ENCODE measurements at regions of chr5 and their contacts with region 1.

Region 1: GRCh38 chr5:126370796-126371718 is 52.2 kb upstream of the GRAMD2B start:
- DNase-seq: no peak
- ATAC-seq: no peak
- H3K4me3 ChIP-seq: no peak overlapping the region
- H3K27ac ChIP-seq: no peak overlapping the region
- H3K4me1 ChIP-seq: peaks cover 0 to 11% (median 0%) of the 10 kb centered on the region in 9 donors
- H3K27me3 ChIP-seq: no peaks in the 10 kb centered on the region
- CTCF ChIP-seq: no peak

Region 2: GRCh38 chr5:126198531-126198930 is 172.5 kb before region 1 on chr5:
- intact Hi-C with region 1: no loop called
- DNase-seq: no peak
- ATAC-seq: no peak
- H3K4me3 ChIP-seq: no peak overlapping the region
- H3K27ac ChIP-seq: no peak overlapping the region
- H3K4me1 ChIP-seq: no peaks in the 10 kb centered on the region
- H3K27me3 ChIP-seq: no peaks in the 10 kb centered on the region
- CTCF ChIP-seq: no peak

Region 3: DNA sequence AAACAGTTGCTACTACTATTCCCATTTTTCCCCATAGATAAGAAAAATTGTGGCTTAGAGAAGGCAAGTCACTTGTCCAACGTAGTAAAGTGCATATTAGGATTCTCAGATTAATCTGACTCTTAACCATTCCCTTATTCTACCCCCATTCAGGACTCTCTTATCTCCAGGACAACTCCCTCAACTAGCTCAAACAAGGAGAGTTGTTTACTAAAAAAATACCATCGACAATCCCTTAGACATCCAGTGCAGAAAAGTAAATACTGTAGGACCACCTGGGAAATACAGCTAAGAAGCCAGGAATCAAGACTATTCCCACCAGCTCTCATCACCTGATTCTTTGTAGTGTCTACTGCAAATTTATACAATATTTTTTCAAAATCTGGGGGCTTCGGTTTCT is 42.8 kb after region 1 on chr5:
- intact Hi-C with region 1: loop called in 1 of 10 experiments (anchors 1 kb)
- DNase-seq: no peak
- ATAC-seq: no peak
- H3K4me3 ChIP-seq: no peak overlapping the region
- H3K27ac ChIP-seq: peak overlapping the region in 3 of 10 donors; percentile 47 to 82 (median 76)
- H3K4me1 ChIP-seq: peaks cover 10 to 33% (median 27%) of the 10 kb centered on the region in 9 donors
- H3K27me3 ChIP-seq: no peaks in the 10 kb centered on the region
- CTCF ChIP-seq: no peak

Region 4: GRCh38 chr5:126422989-126423788 is 52.1 kb after region 1 on chr5 and contains the start of gene GRAMD2B:
- intact Hi-C with region 1: loop called in 3 of 10 experiments (anchors 5 to 10 kb)
- DNase-seq: peak; percentile 86 to 89
- ATAC-seq: peak; percentile 96 to 99 (median 98)
- H3K4me3 ChIP-seq: peak within 1 kb of the TSS; percentile 56 to 88 (median 65)
- H3K27ac ChIP-seq: peak within 1 kb of the TSS; percentile 87 to 97 (median 94)
- H3K4me1 ChIP-seq: peaks cover 0 to 35% (median 23%) of the 10 kb centered on the region in 9 donors
- H3K27me3 ChIP-seq: no peaks in the 10 kb centered on the region
- CTCF ChIP-seq: no peak
- total RNA-seq, gene GRAMD2B: 29.1 to 47.3 (median 35.3) TPM

Region 5: GRCh38 chr5:126499853-126500342 is 128.8 kb after region 1 on chr5:
- intact Hi-C with region 1: no loop called
- DNase-seq: no peak
- ATAC-seq: no peak
- H3K4me3 ChIP-seq: no peak overlapping the region
- H3K27ac ChIP-seq: no peak overlapping the region
- H3K4me1 ChIP-seq: peaks cover 0 to 20% (median 15%) of the 10 kb centered on the region in 9 donors
- H3K27me3 ChIP-seq: no peaks in the 10 kb centered on the region
- CTCF ChIP-seq: peak; percentile 30 to 61 (median 51)

Measured in heart right ventricle (tissue), 16 donors.